RWPE1 (cell line): ENCODE measurements at regions of chr5 and their contacts with region 1.

Region 1: DNA sequence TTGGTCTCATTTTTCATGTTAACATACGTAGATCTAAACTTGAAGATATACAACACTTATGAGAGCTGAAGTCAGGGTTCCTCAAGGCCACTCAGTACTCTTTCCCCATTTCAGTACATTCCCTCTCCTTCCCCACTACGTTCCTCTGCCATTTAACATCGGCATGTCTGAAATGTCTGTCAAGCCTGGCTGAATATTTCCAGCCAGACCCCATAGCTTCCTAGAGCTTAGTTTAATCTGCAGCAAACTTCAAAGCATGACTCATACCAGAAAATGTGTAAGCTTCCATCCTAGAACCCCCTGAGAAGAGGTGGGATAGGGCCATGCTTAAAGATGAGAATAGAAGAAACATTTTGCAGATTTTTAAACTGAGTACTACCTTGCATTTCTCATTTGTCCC is 6.2 kb downstream of the GZMA start:
- DNase-seq: no peak
- H3K27ac ChIP-seq: no peak overlapping the region
- CTCF ChIP-seq: no peak

Region 2: DNA sequence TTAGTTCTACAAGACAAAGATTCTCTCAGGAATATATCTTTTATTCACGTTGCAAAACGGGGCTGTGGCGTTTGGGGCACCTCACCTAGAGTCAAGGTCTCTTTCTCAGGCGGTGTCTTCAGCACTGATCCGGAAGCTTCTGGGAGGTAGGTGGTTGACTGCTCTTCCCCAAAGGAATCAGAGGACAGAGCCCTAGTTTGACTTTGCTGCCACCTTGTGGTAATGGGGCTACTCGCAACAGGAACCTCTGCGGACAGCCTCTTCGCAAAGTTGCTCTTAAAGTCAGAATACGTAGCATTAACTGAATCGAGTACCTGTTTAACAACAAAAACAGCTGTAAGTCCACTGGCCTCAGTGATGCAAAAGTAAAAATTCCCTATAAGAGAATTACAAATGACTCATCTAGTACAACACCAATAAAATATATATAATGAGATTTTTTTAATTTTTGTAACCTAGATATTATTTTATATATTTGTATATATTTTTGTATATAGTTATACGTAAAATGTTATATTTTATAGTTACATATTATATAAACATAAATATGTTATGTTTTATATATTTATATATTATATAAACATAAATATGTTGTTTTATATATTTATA is 38.0 kb after region 1 on chr5:
- CTCF ChIA-PET with region 1: interaction called, 12 read pairs
- POLR2A ChIA-PET with region 1: no interaction called
- DNase-seq: peak; percentile 87
- H3K27ac ChIP-seq: no peak overlapping the region
- CTCF ChIP-seq: peak; percentile 98